Motor neuron (in vitro differentiated cells): ENCODE measurements at regions of chr5 and their contacts with region 1.

Region 1: GRCh38 chr5:140564196-140565023 is at the starts of genes APBB3 and SLC35A4:
- ATAC-seq: peak; percentile 80 to 93 (median 88)
- H3K4me3 ChIP-seq: peak within 1 kb of the TSS; percentile 73 to 92 (median 79)
- H3K27ac ChIP-seq: peak within 1 kb of the TSS; percentile 95 to 96
- H3K4me1 ChIP-seq: peaks cover 18 to 22% of the 10 kb centered on the region in 2 donors
- total RNA-seq, gene APBB3: 15.7 to 81.1 (median 33.9) TPM
- total RNA-seq, gene SLC35A4: 13.1 to 64.1 (median 34.1) TPM

Region 2: DNA sequence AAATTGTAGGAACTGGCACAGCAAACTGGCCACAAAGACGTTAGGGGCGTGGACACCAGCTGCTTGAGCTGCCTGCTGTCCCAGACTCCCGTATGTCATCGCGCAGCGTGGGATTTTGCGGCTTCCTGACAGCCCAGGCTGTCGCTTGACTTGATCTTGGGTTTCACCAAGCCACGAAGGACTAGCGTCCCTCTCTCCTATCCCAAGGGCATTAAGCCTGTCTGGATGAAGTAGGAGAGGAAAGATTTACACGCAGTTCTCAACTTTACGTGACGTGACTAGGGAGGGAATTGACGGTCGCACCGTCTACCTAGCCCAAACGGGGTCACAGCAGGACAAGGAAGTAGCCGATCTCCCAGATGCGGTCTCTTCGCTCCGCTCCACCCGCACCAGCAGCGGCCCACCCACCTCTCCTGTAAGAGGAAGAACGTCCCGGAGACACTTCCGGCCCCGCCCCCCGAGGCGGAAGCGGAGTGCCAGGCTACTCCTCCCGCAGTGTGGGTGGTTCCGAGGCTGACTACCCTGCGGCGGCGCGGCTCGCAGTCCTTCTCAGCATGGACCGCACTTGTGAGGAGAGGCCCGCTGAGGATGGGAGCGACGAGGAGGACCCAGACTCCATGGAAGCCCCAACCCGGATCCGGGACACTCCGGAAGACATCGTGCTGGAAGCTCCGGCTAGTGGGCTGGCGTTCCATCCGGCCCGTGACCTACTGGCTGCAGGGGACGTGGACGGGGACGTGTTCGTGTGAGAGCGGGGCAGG is 100.1 kb after region 1 on chr5 and contains the start of gene WDR55:
- in situ Hi-C with region 1: loop called in 2 of 9 experiments (anchors 25 kb)
- ATAC-seq: peak; percentile 90 to 97 (median 94)
- H3K4me3 ChIP-seq: peak within 1 kb of the TSS; percentile 72 to 84 (median 75)
- H3K27ac ChIP-seq: peak within 1 kb of the TSS; percentile 85
- H3K4me1 ChIP-seq: peaks cover 14 to 15% of the 10 kb centered on the region in 2 donors
- total RNA-seq, gene WDR55: 9.9 to 29.8 (median 15.1) TPM

Region 3: GRCh38 chr5:140690941-140691924 is 126.8 kb after region 1 on chr5 and contains the starts of genes HARS1 and HARS2:
- in situ Hi-C with region 1: loop called in 1 of 9 experiments (anchors 25 kb)
- ATAC-seq: peak; percentile 93 to 98 (median 98)
- H3K4me3 ChIP-seq: peak within 1 kb of the TSS; percentile 51 to 98 (median 83)
- H3K27ac ChIP-seq: peak within 1 kb of the TSS; percentile 65 to 90
- H3K4me1 ChIP-seq: peaks cover 10 to 14% of the 10 kb centered on the region in 2 donors
- total RNA-seq, gene HARS1: 53.1 to 102 (median 77.0) TPM
- total RNA-seq, gene HARS2: 21.4 to 45.7 (median 32.6) TPM

Region 4: DNA sequence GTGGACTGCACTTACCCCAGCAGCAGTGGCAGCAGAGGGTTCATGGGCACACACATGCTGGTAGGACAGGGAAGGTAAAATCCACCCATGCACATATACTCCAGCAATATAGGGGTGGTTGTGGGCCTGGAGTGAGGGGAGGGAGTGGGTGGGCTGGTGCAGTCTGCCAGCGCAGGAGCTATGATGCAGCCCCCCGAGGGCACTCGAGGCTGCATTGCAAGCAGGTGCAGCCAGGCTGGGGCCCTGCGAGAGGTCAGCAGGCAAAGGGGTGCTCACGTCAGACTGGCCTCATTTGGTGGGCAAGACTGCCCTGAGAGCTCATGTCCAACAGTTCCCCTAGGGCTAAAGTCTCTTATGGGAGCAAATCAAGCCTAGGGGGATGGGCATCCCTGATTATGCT is 189.2 kb after region 1 on chr5:
- in situ Hi-C with region 1: no loop called
- ATAC-seq: no peak
- H3K4me3 ChIP-seq: no peak overlapping the region
- H3K27ac ChIP-seq: no peak overlapping the region
- H3K4me1 ChIP-seq: no peaks in the 10 kb centered on the region